ENCODE measurements at regions of chr14 and their contacts with region 1.

Region 1: DNA sequence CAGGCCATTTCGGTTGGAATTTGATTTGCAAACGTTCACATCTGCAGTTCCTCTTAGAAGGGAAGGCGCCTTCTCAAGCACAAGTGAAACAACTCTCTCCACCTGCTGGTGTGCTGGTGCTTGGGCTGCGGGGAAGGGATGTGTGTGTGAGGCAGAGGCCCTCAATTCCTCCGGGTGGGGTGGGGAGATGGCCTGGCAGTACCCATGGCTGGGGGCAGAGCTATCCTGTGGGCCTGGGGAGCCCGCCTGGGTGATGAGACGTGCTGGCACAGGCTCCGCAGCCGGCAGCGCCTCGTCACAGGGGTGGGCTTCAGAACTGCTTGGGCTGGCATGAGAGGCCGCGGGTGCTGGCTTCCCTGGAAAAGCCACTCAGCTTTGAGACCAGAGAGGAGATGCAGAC is 28.9 kb upstream of the TDRD9 start:
- DNase-seq: no peak
- ATAC-seq: no peak
- H3K4me3 Mint-ChIP-seq: no peak overlapping the region
- H3K27ac Mint-ChIP-seq: no peak overlapping the region
- H3K4me1 Mint-ChIP-seq: peaks cover 2% of the 10 kb centered on the region
- H3K27me3 Mint-ChIP-seq: no peaks in the 10 kb centered on the region

Region 2: GRCh38 chr14:103546652-103547454 is 352.5 kb before region 1 on chr14:
- CTCF ChIA-PET with region 1: no interaction called
- DNase-seq: peak; percentile 79
- ATAC-seq: peak; percentile 77
- H3K4me3 Mint-ChIP-seq: no peak overlapping the region
- H3K27ac Mint-ChIP-seq: no peak overlapping the region
- H3K4me1 Mint-ChIP-seq: peaks cover 3% of the 10 kb centered on the region
- H3K27me3 Mint-ChIP-seq: no peaks in the 10 kb centered on the region

Region 3: GRCh38 chr14:103879570-103880347 is 19.6 kb before region 1 on chr14:
- CTCF ChIA-PET with region 1: interaction called, 17 read pairs
- DNase-seq: no peak
- ATAC-seq: no peak
- H3K4me3 Mint-ChIP-seq: peak overlapping the region; percentile 33
- H3K27ac Mint-ChIP-seq: no peak overlapping the region
- H3K4me1 Mint-ChIP-seq: peaks cover 20% of the 10 kb centered on the region
- H3K27me3 Mint-ChIP-seq: no peaks in the 10 kb centered on the region

Region 4: GRCh38 chr14:103910262-103910935 is 11.1 kb after region 1 on chr14:
- CTCF ChIA-PET with region 1: interaction called, 24 read pairs
- DNase-seq: peak; percentile 79
- ATAC-seq: peak; percentile 91
- H3K4me3 Mint-ChIP-seq: peak overlapping the region; percentile 38
- H3K27ac Mint-ChIP-seq: peak overlapping the region; percentile 63
- H3K4me1 Mint-ChIP-seq: peaks cover 17% of the 10 kb centered on the region
- H3K27me3 Mint-ChIP-seq: peaks cover 2% of the 10 kb centered on the region

Region 5: DNA sequence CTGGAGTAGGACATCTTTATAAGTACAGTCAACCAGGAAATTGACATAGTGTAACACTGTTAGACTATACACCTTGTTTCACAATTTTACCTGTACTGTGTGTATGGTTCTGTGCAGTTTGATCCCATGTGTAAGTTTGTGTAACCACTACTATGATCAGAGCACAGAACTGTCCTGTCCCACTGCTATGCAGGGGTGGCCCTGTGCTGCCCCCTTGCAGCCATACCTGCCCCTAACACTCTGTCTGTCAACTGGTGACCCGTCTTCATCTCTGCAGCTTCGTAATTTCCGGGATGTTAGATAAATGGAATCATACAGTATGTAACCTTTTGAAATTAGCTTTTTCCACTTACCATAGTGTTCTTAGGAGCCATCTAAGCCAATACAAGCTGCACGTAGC is 101.7 kb after region 1 on chr14:
- CTCF ChIA-PET with region 1: interaction called, 10 read pairs
- DNase-seq: no peak
- ATAC-seq: peak; percentile 63
- H3K4me3 Mint-ChIP-seq: no peak overlapping the region
- H3K27ac Mint-ChIP-seq: no peak overlapping the region
- H3K4me1 Mint-ChIP-seq: peaks cover 4% of the 10 kb centered on the region
- H3K27me3 Mint-ChIP-seq: peaks cover 21% of the 10 kb centered on the region